Caco-2 (cell line): ENCODE measurements at regions of chr1 and their contacts with region 1.

Region 1: GRCh38 chr1:42335050-42335808 is at the start of gene FOXJ3:
- DNase-seq: peak; percentile 92 to 93
- H3K4me3 ChIP-seq: peak within 1 kb of the TSS; percentile 88
- H3K4me3 Mint-ChIP-seq: peak within 1 kb of the TSS; percentile 93
- H3K27ac Mint-ChIP-seq: peak within 1 kb of the TSS; percentile 96
- H3K4me1 ChIP-seq: peaks cover 32% of the 10 kb centered on the region
- H3K4me1 Mint-ChIP-seq: peaks cover 53% of the 10 kb centered on the region
- H3K27me3 ChIP-seq: no peaks in the 10 kb centered on the region
- H3K27me3 Mint-ChIP-seq: no peaks in the 10 kb centered on the region
- CTCF ChIP-seq: no peak
- total RNA-seq, gene FOXJ3: 60.2 and 66.7 TPM in 2 replicates

Region 2: DNA sequence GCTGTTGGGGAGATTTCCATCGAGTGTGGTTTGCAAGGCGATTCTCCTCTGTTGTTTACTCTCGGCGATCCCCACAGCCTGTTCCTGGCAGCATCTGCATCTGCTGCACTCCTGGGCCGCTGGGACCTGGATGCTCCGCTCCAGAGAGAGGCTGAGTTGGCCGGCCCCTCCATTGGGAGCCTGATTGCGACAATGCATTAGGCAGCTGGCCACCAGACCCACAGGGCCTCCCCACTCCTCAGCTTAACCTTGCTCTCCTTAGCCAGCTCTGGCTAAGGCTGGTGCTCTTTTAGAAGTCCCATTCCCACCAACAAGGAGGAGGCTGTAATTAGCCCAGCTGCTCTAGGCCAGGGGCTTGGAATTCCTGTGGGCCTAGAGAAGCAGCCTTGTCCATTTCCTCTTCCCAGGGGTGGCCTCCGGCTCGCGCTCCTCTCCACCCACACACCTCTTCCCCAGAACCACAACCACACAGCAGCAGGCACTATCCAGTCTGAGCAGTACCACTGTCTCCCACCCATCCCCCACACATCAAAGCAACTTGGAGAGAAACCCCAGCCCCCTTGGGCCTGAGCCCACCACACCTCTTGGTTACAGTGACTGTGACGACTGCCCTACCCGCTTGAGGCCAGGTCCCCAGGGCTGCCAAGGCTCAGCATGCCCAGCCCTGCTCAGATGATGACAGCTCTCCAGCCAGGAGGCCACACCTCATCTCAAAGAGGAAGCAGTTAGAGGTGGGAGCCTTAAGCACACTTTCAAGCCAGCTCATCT is 656.9 kb before region 1 on chr1:
- CTCF ChIA-PET with region 1: no interaction called
- POLR2A ChIA-PET with region 1: no interaction called
- intact Hi-C with region 1: no loop called
- DNase-seq: no peak
- H3K4me3 ChIP-seq: no peak overlapping the region
- H3K4me3 Mint-ChIP-seq: no peak overlapping the region
- H3K27ac Mint-ChIP-seq: no peak overlapping the region
- H3K4me1 ChIP-seq: no peaks in the 10 kb centered on the region
- H3K4me1 Mint-ChIP-seq: no peaks in the 10 kb centered on the region
- H3K27me3 ChIP-seq: no peaks in the 10 kb centered on the region
- H3K27me3 Mint-ChIP-seq: no peaks in the 10 kb centered on the region
- CTCF ChIP-seq: no peak

Region 3: GRCh38 chr1:42298520-42298919 is 36.7 kb before region 1 on chr1:
- CTCF ChIA-PET with region 1: no interaction called
- POLR2A ChIA-PET with region 1: no interaction called
- intact Hi-C with region 1: no loop called
- DNase-seq: no peak
- H3K4me3 ChIP-seq: no peak overlapping the region
- H3K4me3 Mint-ChIP-seq: no peak overlapping the region
- H3K27ac Mint-ChIP-seq: no peak overlapping the region
- H3K4me1 ChIP-seq: no peaks in the 10 kb centered on the region
- H3K4me1 Mint-ChIP-seq: no peaks in the 10 kb centered on the region
- H3K27me3 ChIP-seq: no peaks in the 10 kb centered on the region
- H3K27me3 Mint-ChIP-seq: no peaks in the 10 kb centered on the region
- CTCF ChIP-seq: no peak

Region 4: GRCh38 chr1:42380586-42381279 is 45.5 kb after region 1 on chr1 and contains the start of gene RIMKLA:
- CTCF ChIA-PET with region 1: no interaction called
- POLR2A ChIA-PET with region 1: no interaction called
- intact Hi-C with region 1: loop called (anchors 2 kb)
- DNase-seq: peak; percentile 40 to 74
- H3K4me3 ChIP-seq: peak within 1 kb of the TSS; percentile 45
- H3K4me3 Mint-ChIP-seq: peak within 1 kb of the TSS; percentile 72
- H3K27ac Mint-ChIP-seq: no peak within 1 kb of the TSS
- H3K4me1 ChIP-seq: no peaks in the 10 kb centered on the region
- H3K4me1 Mint-ChIP-seq: no peaks in the 10 kb centered on the region
- H3K27me3 ChIP-seq: no peaks in the 10 kb centered on the region
- H3K27me3 Mint-ChIP-seq: no peaks in the 10 kb centered on the region
- CTCF ChIP-seq: no peak
- total RNA-seq, gene RIMKLA: 10.6 and 12.4 TPM in 2 replicates

Region 5: DNA sequence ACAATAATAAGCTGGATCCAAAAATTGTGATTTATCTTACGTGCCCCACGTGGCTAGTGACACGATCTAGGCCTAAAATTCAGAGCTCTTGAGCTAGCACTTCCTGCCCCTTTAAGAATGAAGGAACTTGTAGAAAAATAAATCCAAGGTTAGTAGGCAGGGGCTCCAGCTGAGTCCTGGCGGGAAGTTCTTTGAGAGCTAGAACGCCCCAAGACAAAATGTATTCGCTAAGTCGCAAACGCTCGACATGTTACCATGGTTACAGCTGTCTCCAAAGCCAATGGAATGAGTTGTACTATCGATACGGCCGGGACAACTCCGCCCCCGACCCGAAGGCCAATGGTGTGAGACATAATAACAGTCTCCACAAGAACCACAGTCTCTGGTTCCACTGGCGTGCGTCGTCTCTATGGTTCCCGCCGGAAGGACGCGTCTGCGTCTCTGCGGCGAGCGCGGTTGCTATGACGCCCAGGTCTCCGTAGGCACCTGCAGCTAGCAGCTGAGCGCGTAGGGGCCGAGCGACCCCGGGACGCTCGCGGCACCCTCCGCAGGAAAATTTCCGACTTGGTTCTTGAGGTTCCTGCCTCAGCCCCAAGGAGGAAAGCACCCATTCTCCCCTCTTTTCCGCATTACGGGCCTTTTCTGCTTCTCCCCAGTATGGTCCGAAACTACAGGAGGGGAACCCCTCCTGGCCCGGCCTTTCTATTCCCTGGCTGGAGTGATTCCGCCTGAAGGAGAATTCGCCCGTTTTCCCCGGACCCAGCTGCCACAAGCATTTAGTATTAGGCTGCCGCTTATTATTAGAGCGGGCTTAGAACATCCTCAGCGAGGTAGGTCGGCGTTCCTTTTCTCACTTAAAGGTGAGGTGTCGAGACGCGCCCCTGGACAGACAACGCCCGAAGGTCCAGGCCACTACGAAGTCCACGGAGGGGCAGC is 127.9 kb after region 1 on chr1 and contains the start of gene CCDC30:
- CTCF ChIA-PET with region 1: no interaction called
- POLR2A ChIA-PET with region 1: interaction called, 3 read pairs
- intact Hi-C with region 1: loop called (anchors 5 kb)
- DNase-seq: peak; percentile 95 to 96
- H3K4me3 ChIP-seq: peak within 1 kb of the TSS; percentile 38
- H3K4me3 Mint-ChIP-seq: peak within 1 kb of the TSS; percentile 72
- H3K27ac Mint-ChIP-seq: peak within 1 kb of the TSS; percentile 81
- H3K4me1 ChIP-seq: peaks cover 14% of the 10 kb centered on the region; the same call in 1 of the 2 replicates
- H3K4me1 Mint-ChIP-seq: peaks cover 21% of the 10 kb centered on the region
- H3K27me3 ChIP-seq: no peaks in the 10 kb centered on the region
- H3K27me3 Mint-ChIP-seq: no peaks in the 10 kb centered on the region
- CTCF ChIP-seq: no peak
- total RNA-seq, gene CCDC30: 1.3 and 1.4 TPM in 2 replicates